ENCODE measurements at regions of chr17 and their contacts with region 1.

Region 1: GRCh38 chr17:82297714-82298537 is 19.5 kb downstream of the CD7 start:
- DNase-seq: peak; percentile 97
- ATAC-seq: peak; percentile 74
- H3K4me3 ChIP-seq: peak overlapping the region; percentile 71 to 99 (median 87)
- H3K4me3 Mint-ChIP-seq: peak overlapping the region; percentile 99
- H3K27ac ChIP-seq: peak overlapping the region; percentile 99 to 100
- H3K27ac Mint-ChIP-seq: peak overlapping the region; percentile 100
- H3K4me1 ChIP-seq: peaks cover 45 to 69% of the 10 kb centered on the region in 2 donors
- H3K4me1 Mint-ChIP-seq: peaks cover 73% of the 10 kb centered on the region
- H3K27me3 ChIP-seq: no peaks in the 10 kb centered on the region
- H3K27me3 Mint-ChIP-seq: no peaks in the 10 kb centered on the region
- CTCF ChIP-seq: no peak

Region 2: DNA sequence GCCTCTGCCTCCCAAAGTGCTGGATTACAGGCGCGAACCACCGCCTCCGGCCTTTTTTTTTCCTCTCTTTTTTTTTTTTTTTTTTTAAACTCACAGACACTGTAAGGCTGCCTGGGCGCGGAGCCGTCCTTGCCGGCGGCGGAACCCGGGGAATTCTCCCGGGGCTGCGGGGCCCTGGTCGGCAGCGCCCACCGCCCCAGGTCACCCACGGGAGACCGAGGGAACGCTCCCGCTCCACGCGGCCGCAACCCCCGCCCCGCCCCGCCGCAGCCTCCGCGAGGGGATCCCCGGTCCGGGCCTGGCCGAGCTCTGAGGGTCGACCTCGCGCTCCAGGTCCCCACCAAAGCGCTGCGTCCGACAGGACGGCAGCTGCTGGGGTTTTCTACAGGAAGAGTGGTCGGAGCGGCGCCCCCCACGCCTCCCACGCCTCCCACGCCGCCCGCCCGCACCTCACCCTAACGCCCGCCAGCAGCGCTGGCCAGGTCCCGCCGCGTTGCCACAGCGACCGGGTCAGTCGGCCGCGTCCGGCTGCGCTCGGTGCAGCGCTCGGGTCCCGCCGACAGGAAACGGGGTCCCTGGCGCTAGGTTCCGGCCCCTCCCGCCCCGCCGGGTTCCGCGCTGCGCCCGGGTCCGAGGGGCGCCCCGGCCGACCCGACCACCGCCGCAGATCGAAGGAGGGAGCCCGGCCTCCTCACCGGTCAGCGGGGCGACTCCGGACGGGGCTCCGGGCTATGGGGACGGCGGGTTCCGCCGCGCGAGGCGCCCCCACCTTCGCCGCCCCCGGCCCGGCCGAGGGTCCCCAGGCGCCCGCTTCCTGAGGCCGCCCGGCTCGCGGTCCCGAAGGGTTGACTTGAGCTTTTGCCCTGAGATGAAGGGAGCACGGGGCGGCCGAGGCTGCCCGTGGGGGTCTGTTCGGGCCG is 85.3 kb before region 1 on chr17 and contains the start of gene CCDC57:
- CTCF ChIA-PET with region 1: interaction called, 4 read pairs
- POLR2A ChIA-PET with region 1: interaction called, 7 read pairs
- intact Hi-C with region 1: loop called (anchors 2 kb)
- DNase-seq: peak; percentile 88
- ATAC-seq: peak; percentile 66
- H3K4me3 ChIP-seq: peak within 1 kb of the TSS in 4 of 5 experiments; percentile 52 to 79 (median 68)
- H3K4me3 Mint-ChIP-seq: peak within 1 kb of the TSS; percentile 87
- H3K27ac ChIP-seq: peak within 1 kb of the TSS; percentile 22 to 81
- H3K27ac Mint-ChIP-seq: peak within 1 kb of the TSS; percentile 93
- H3K4me1 ChIP-seq: peaks cover 31 to 37% of the 10 kb centered on the region in 2 donors
- H3K4me1 Mint-ChIP-seq: peaks cover 32% of the 10 kb centered on the region
- H3K27me3 ChIP-seq: no peaks in the 10 kb centered on the region
- H3K27me3 Mint-ChIP-seq: no peaks in the 10 kb centered on the region
- CTCF ChIP-seq: no peak
- total RNA-seq, gene CCDC57: 67.2 and 82.0 TPM in 2 replicates

Region 3: DNA sequence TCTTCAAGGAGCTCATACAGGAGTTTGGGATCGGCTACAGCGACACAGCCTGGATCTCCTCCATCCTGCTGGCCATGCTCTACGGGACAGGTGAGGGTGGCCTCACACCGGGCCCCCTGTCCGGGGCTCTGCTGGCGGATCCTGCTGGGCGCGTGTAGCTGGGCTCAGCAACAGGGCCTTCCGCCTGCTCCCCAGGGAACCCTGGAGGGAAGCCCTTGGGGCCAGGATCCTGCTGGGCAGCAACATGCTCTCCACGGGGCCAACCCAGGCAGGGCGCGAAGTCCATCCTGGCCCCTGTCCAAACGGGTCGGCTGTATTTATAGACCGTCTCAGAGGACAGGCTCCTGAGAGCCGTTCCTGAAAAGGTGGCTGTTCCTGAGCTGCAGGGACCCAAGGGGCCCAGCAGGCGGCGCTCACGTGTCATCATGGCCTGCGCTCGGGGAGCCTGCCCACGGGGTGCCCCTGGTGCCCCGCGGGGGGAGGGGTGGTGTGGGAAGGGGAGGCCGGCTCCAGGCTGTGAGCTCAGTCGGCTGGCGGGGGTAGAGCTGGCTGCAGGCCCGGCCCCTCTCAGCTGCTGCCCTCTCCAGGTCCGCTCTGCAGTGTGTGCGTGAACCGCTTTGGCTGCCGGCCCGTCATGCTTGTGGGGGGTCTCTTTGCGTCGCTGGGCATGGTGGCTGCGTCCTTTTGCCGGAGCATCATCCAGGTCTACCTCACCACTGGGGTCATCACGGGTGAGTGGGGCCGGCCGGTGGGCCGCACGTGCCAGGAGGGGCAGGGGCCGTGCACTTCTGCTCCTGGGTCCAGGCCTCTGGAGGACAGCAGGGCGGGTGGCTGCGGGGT is 61.6 kb before region 1 on chr17:
- CTCF ChIA-PET with region 1: interaction called, 24 read pairs
- POLR2A ChIA-PET with region 1: interaction called, 15 read pairs
- intact Hi-C with region 1: no loop called
- DNase-seq: peak; percentile 81
- ATAC-seq: peak; percentile 63
- H3K4me3 ChIP-seq: no peak overlapping the region
- H3K4me3 Mint-ChIP-seq: no peak overlapping the region
- H3K27ac ChIP-seq: no peak overlapping the region
- H3K27ac Mint-ChIP-seq: peak overlapping the region; percentile 37
- H3K4me1 ChIP-seq: peaks cover 17 to 69% of the 10 kb centered on the region in 2 donors
- H3K4me1 Mint-ChIP-seq: peaks cover 51% of the 10 kb centered on the region
- H3K27me3 ChIP-seq: no peaks in the 10 kb centered on the region
- H3K27me3 Mint-ChIP-seq: no peaks in the 10 kb centered on the region
- CTCF ChIP-seq: peak; percentile 83

Region 4: DNA sequence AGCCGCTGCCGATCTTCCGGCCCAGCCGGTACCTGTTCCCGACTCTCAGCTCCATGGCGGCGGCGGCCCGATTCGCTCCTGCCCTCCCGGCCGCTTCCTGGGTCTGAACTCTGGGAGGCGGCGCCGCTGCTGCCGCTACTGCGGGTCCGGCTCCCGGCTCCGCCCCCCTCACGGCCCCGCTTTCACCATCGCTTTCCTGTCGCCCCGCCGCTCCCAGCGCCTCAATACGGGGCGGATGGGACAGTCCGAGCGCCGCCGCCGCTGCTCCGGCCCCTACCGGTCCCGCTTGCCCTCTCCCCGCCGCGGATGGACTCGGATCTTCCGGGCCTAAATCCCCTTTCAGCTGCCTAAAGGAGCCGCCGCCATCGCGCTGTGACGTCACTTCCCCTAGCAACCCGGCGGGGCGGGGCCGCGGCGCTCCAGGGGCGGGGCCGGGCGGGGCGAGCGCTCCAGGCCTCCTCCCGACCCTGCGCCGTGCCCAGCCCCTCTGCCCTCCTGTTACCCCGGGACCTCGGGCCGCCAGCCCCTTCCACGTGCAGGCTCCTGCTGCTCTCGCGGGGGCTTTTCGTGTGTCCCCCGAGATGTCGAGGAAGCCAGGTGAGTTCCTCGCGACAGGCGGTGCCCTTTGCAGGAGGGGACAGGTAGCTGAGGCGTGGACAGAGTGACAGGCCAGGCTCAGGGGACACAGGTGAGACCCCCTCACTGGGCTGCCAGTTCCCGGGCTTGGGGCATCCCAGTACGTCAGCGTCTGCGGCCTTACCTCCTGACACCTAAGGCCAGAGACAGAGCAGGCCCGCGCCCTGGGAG is 24.4 kb before region 1 on chr17 and contains the start of gene CSNK1D:
- CTCF ChIA-PET with region 1: interaction called, 14 read pairs
- POLR2A ChIA-PET with region 1: interaction called, 28 read pairs
- intact Hi-C with region 1: loop called (anchors 1 kb)
- DNase-seq: peak; percentile 97
- ATAC-seq: peak; percentile 77
- H3K4me3 ChIP-seq: peak within 1 kb of the TSS; percentile 70 to 87 (median 80)
- H3K4me3 Mint-ChIP-seq: peak within 1 kb of the TSS; percentile 93
- H3K27ac ChIP-seq: peak within 1 kb of the TSS; percentile 83 to 95
- H3K27ac Mint-ChIP-seq: peak within 1 kb of the TSS; percentile 99
- H3K4me1 ChIP-seq: peaks cover 30 to 48% of the 10 kb centered on the region in 2 donors
- H3K4me1 Mint-ChIP-seq: peaks cover 41% of the 10 kb centered on the region
- H3K27me3 ChIP-seq: peaks cover 0 to 5% (median 0%) of the 10 kb centered on the region in 4 experiments
- H3K27me3 Mint-ChIP-seq: no peaks in the 10 kb centered on the region
- CTCF ChIP-seq: no peak
- total RNA-seq, gene CSNK1D: 241 and 258 TPM in 2 replicates

Region 5: DNA sequence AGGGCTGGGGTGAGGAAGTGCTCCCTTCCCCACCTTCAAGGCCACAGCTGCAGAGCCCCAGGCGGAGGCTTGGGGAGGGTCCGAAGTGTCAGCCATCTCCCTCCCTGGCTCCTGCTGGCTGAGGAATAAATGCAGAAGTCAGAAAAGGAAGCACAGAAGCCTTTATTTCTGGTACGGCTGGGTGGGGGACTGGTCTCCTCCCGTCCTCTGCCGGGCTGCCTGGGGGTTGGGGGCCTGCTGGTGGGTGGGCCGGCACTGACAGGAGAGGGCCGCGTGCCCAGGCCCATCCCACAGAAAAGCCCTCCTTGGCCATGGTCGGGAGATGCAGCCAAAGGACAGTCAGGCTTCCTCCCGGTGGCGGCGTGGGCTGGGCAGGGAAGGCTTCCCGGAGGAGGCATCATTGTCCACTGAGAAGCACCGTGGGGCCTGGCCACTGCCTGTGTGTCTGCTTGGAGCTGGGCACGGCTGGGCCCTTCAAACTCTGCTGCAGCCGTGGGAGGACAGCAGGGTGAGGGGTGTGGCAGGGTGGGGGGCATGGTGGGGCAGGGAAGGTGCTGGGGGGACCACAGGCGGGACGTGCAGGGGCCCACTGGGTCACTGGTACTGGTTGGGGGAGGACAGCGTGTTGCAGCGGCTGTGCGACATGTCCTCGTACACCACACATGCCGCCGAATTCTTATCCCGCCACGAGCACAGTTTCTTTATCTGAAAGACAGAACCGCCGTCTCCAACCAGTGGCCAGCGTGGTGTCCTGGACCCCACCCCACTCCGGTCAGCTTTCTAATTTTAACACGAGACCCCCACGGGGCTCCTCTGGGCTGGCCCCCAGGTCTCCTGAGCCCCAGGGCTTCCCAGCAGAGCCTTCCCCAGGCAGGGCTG is 17.0 kb after region 1 on chr17:
- CTCF ChIA-PET with region 1: interaction called, 68 read pairs
- POLR2A ChIA-PET with region 1: interaction called, 4 read pairs
- intact Hi-C with region 1: no loop called
- DNase-seq: no peak
- ATAC-seq: no peak
- H3K4me3 ChIP-seq: no peak overlapping the region
- H3K4me3 Mint-ChIP-seq: no peak overlapping the region
- H3K27ac ChIP-seq: no peak overlapping the region
- H3K27ac Mint-ChIP-seq: no peak overlapping the region
- H3K4me1 ChIP-seq: peaks cover 18 to 25% of the 10 kb centered on the region in 2 donors
- H3K4me1 Mint-ChIP-seq: peaks cover 15% of the 10 kb centered on the region
- H3K27me3 ChIP-seq: peaks cover 0 to 33% (median 10%) of the 10 kb centered on the region in 4 experiments
- H3K27me3 Mint-ChIP-seq: peaks cover 23% of the 10 kb centered on the region
- CTCF ChIP-seq: no peak

Region 6: DNA sequence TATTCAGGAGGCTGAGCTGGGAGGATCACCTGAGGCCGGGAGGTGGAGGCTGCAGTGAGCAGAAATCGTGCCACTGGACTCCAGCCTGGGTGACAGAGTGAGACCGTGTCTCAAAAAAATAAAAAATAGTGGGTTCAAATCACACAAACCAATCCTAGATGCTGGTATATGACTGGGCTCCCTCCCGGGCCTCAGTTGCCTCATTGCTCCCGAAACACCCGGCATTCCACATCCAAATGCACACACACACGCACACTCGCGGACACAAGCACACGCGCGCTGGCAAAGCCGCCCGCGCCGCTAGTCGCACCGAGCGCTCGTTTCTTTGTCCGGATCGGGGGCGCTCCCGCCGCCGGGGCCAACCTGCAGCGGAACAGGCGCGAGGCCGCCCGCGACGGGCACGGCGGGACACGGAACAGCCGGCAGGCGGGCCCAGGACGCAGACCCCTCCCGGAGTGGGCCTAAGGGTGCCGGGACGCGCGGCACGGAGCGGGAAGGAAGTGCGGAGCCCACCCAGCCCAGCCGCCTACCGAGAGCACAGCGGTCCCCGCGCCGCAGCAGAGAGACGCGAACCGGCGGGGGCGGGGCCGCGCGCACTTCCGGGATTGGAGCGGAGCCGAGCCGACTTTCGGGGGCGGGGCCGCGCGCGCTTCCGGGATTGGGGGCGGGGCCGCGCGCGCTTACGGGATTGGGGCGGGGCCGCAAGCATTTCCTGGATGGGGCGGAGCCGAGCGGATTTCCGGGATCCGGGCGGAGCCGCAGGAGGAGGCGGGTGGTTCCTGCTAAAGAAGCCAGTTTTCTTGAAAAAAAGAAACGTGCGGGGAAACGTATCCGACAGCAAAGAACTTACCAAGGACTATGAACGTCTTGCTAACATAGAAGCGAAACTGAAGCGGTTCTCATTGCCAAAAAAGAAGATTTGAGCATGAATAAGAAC is 152.5 kb after region 1 on chr17 and contains the start of gene CYBC1:
- CTCF ChIA-PET with region 1: no interaction called
- POLR2A ChIA-PET with region 1: interaction called, 5 read pairs
- intact Hi-C with region 1: loop called (anchors 1 kb)
- DNase-seq: peak; percentile 97
- ATAC-seq: peak; percentile 55
- H3K4me3 ChIP-seq: peak within 1 kb of the TSS; percentile 81 to 99 (median 93)
- H3K4me3 Mint-ChIP-seq: peak within 1 kb of the TSS; percentile 88
- H3K27ac ChIP-seq: peak within 1 kb of the TSS; percentile 95 to 99
- H3K27ac Mint-ChIP-seq: peak within 1 kb of the TSS; percentile 96
- H3K4me1 ChIP-seq: peaks cover 17 to 47% of the 10 kb centered on the region in 2 donors
- H3K4me1 Mint-ChIP-seq: peaks cover 40% of the 10 kb centered on the region
- H3K27me3 ChIP-seq: no peaks in the 10 kb centered on the region
- H3K27me3 Mint-ChIP-seq: no peaks in the 10 kb centered on the region
- CTCF ChIP-seq: no peak
- total RNA-seq, gene CYBC1: 569 and 578 TPM in 2 replicates